ENCODE measurements at regions of chr12 and their contacts with region 1.

Region 1: DNA sequence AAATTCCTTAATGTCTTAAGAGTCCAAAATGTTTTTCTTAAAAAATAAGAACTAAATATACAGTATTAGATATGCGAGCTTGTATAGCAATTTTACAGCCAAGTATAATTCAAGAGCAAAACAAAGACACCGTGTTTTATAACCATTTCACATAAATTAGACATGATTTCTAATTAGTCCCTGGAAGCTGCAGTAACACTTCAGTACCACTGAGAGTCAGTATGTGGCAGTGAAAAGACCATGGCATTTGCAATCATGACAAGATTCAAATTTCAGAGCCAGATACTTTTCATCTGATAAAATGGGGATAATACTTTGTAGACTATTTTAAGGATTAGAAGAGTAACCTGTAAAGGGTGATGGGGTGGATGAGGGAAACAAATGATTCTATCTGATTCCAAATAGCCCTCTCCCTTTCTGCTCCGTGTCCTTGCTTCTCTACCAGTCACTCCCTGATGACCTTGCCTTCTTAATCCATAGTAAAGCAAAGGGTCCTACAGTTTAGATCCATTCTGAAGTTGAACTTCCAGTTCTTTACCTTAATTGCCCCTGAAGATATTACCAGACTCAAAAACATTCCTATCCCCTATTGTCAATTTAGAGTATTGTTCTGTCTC is 145.4 kb upstream of the ABCD2 start:
- DNase-seq: no peak
- H3K4me3 Mint-ChIP-seq: no peak overlapping the region
- H3K27ac Mint-ChIP-seq: no peak overlapping the region
- H3K4me1 Mint-ChIP-seq: no peaks in the 10 kb centered on the region
- H3K27me3 Mint-ChIP-seq: no peaks in the 10 kb centered on the region

Region 2: GRCh38 chr12:39990122-39991101 is 225.4 kb after region 1 on chr12:
- intact Hi-C with region 1: loop called (anchors 1 kb)
- DNase-seq: peak; percentile 13
- H3K4me3 Mint-ChIP-seq: no peak overlapping the region
- H3K27ac Mint-ChIP-seq: no peak overlapping the region
- H3K4me1 Mint-ChIP-seq: no peaks in the 10 kb centered on the region
- H3K27me3 Mint-ChIP-seq: peaks cover 2% of the 10 kb centered on the region

Measured in activated T-helper 1 cell treated with anti-CD3 and anti-CD28 coated beads, Interleukin-12 subunit alpha, Interleukin-12 subunit beta, Interleukin-2, Interleukin-4 antibody, amounts not matched to agents 30 ng/mL and 10 ng/mL and 1 ng/mL, durations not matched to agents 14 hours and 24 hours and 36 hours (primary cell).